ENCODE measurements at regions of chr9 and their contacts with region 1.

Region 1: GRCh38 chr9:15135164-15135792 is 171.7 kb downstream of the TTC39B start:
- DNase-seq: peak; percentile 51
- ATAC-seq: peak; percentile 91
- H3K4me3 Mint-ChIP-seq: no peak overlapping the region
- H3K27ac Mint-ChIP-seq: no peak overlapping the region
- H3K4me1 Mint-ChIP-seq: no peaks in the 10 kb centered on the region
- H3K27me3 Mint-ChIP-seq: no peaks in the 10 kb centered on the region
- CTCF ChIP-seq: peak; percentile 84

Region 2: GRCh38 chr9:14616188-14616982 is 518.9 kb before region 1 on chr9:
- CTCF ChIA-PET with region 1: interaction called, 7 read pairs
- POLR2A ChIA-PET with region 1: no interaction called
- intact Hi-C with region 1: loop called (anchors 10 kb)
- DNase-seq: no peak
- ATAC-seq: peak; percentile 51
- H3K4me3 Mint-ChIP-seq: no peak overlapping the region
- H3K27ac Mint-ChIP-seq: no peak overlapping the region
- H3K4me1 Mint-ChIP-seq: no peaks in the 10 kb centered on the region
- H3K27me3 Mint-ChIP-seq: no peaks in the 10 kb centered on the region
- CTCF ChIP-seq: peak; percentile 72

Region 3: DNA sequence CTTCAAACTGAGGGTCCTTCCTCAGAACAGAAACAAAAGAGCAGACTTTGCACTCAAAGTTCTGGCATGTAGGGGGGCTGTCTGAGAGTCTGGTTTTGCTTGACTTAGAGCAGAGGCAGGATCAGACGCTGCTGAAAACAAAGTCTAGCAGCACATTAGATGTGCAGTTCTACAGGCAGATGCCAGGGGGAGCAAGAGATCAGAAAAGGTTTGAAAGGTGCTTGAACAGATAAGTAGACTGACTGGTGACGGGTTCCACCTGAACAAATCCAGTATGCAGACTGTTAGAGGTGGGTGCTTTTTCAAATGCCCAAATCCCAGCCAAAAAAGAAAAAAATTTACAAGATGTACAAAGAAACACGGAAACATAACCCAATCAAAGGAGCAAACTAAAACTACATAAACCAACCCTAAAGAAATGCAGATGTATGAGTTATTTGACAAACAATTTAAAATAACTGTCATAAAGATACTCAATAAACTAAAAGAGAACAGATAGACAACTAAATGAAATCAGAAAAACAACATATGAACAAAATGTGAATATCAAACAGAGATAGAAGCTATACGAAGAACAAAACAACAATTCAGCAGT is 30.4 kb before region 1 on chr9:
- CTCF ChIA-PET with region 1: interaction called, 70 read pairs
- POLR2A ChIA-PET with region 1: no interaction called
- intact Hi-C with region 1: loop called (anchors 2 kb)
- DNase-seq: peak; percentile 13
- ATAC-seq: peak; percentile 84
- H3K4me3 Mint-ChIP-seq: no peak overlapping the region
- H3K27ac Mint-ChIP-seq: no peak overlapping the region
- H3K4me1 Mint-ChIP-seq: no peaks in the 10 kb centered on the region
- H3K27me3 Mint-ChIP-seq: no peaks in the 10 kb centered on the region
- CTCF ChIP-seq: peak; percentile 76

Region 4: DNA sequence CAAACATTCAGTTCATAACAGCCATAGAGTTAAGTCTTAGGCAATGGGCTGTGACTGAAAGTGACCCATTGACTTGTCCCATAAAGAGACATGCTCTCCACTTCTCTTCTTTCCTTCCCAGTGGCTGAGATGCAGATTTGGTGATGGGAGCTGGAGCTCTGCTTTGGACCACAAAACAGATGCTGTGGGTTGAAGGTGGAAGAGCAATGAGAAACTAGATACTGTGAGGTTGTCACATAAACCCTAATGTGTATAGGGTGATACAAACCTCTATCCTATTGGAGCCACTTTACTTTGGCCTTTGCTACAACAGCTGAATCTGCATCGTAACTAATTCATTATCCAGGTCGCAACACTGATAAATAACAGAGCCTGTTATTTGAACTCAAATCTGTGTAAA is 20.2 kb before region 1 on chr9:
- CTCF ChIA-PET with region 1: interaction called, 10 read pairs
- POLR2A ChIA-PET with region 1: no interaction called
- intact Hi-C with region 1: no loop called
- DNase-seq: no peak
- ATAC-seq: no peak
- H3K4me3 Mint-ChIP-seq: no peak overlapping the region
- H3K27ac Mint-ChIP-seq: no peak overlapping the region
- H3K4me1 Mint-ChIP-seq: no peaks in the 10 kb centered on the region
- H3K27me3 Mint-ChIP-seq: no peaks in the 10 kb centered on the region
- CTCF ChIP-seq: no peak

Measured in activated CD8-positive, alpha-beta T cell treated with anti-CD3 and anti-CD28 coated beads for 36 hours (primary cell).